Breast epithelium (tissue), 4 donors: ENCODE measurements at regions of chr5 and their contacts with region 1.

Region 1: GRCh38 chr5:2120361-2120760 is 237.6 kb upstream of the IRX4 start:
- DNase-seq: no peak
- H3K4me3 ChIP-seq: no peak overlapping the region
- H3K27ac ChIP-seq: no peak overlapping the region
- H3K4me1 ChIP-seq: no peaks in the 10 kb centered on the region
- H3K27me3 ChIP-seq: no peaks in the 10 kb centered on the region
- CTCF ChIP-seq: no peak
- POLR2A ChIP-seq: no peak

Region 2: DNA sequence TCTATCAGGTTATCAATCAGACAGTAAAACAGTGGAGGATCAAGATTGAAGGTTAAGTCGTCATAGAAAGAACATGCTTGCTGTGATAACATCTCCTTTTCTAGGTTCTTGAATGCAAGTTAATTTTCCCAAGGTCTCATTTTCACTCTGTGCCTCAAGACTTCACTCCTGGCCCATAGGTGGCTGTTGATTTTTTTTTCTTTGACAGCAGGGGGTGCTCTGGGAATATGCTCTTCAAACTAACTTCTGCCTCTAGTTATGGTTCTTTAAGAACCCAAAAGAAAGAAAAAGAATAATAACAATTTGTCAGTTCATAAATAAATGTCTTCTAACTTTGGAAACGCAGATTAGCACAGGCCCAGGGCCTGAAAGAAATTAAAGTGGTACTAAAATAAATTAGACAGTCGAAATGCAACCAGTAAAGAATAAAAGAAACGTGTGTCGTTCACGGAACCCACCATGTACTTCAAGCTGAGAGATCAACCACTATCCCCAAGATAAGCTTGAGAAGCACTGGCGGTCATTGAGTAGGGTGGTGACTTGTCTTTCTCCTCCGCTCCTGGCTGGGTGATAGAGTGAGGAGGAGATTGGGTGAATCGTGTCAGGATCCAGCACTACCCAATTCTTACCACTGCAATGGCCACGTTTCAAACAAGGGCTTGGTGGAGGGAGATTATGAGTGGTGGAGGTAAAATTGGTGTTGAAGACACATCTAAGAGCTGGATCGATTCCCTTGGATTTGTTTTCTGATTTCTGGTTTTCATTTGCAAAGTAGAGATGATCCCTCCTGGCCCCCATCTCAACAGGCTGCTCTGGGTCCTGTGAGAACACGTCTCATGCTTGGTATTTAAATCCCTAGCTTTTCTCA is 144.2 kb before region 1 on chr5:
- intact Hi-C with region 1: no loop called
- DNase-seq: no peak
- H3K4me3 ChIP-seq: no peak overlapping the region
- H3K27ac ChIP-seq: peak overlapping the region in 1 of 2 donors; percentile 73
- H3K4me1 ChIP-seq: no peaks in the 10 kb centered on the region
- H3K27me3 ChIP-seq: no peaks in the 10 kb centered on the region
- CTCF ChIP-seq: no peak
- POLR2A ChIP-seq: no peak

Region 3: DNA sequence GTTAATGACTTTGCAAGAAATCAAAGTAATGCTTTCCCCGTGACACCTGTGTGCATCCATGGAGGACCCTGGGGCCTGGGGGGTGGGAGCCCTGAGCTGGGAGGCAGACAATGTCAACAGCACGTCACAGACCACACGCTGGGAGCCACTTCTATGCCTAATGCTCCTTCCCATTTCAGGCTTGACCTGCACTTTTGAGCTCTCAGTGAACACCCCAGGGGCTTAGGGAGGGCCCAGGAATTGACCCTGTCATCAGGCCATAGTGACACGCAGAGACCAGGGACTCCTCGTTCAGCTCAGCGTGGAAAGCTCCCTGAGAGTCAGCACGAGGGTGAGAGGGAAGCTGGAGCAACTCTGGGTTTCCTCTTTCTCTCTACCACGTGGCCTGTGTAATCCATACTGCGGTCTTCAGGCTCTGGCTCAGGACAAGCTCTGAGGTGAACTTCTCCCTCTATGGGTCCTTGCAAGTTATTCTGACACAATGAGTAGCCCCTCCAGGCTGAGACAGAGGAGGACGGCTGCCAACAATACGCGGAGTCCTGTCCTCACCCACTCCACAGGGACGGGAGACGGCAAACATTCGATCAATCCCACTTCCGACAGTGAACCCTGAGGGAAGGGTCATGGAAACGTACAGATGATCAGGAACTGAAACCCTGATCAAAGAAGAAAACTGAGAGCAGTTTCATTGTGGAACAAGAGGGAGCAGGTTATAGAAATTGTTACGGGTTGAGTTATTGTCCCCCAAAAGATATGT is 106.9 kb before region 1 on chr5:
- intact Hi-C with region 1: loop called (anchors 2 kb)
- DNase-seq: no peak
- H3K4me3 ChIP-seq: no peak overlapping the region
- H3K27ac ChIP-seq: peak overlapping the region in 1 of 2 donors; percentile 48
- H3K4me1 ChIP-seq: no peaks in the 10 kb centered on the region
- H3K27me3 ChIP-seq: no peaks in the 10 kb centered on the region
- CTCF ChIP-seq: no peak
- POLR2A ChIP-seq: no peak

Region 4: GRCh38 chr5:2093859-2094615 is 26.3 kb before region 1 on chr5:
- intact Hi-C with region 1: no loop called
- DNase-seq: peak in 1 of 2 donors; percentile 45
- H3K4me3 ChIP-seq: peak overlapping the region in 2 of 3 donors; percentile 3 to 54
- H3K27ac ChIP-seq: peak overlapping the region; percentile 66 to 94
- H3K4me1 ChIP-seq: no peaks in the 10 kb centered on the region
- H3K27me3 ChIP-seq: no peaks in the 10 kb centered on the region
- CTCF ChIP-seq: no peak
- POLR2A ChIP-seq: no peak

Region 5: GRCh38 chr5:2441495-2442180 is 321.3 kb after region 1 on chr5:
- intact Hi-C with region 1: no loop called
- DNase-seq: no peak
- H3K4me3 ChIP-seq: no peak overlapping the region
- H3K27ac ChIP-seq: no peak overlapping the region
- H3K4me1 ChIP-seq: no peaks in the 10 kb centered on the region
- H3K27me3 ChIP-seq: peaks cover 0 to 10% of the 10 kb centered on the region in 2 donors
- CTCF ChIP-seq: no peak
- POLR2A ChIP-seq: no peak